Tibial artery (tissue), 4 donors: ENCODE measurements at regions of chr3 and their contacts with region 1.

Region 1: DNA sequence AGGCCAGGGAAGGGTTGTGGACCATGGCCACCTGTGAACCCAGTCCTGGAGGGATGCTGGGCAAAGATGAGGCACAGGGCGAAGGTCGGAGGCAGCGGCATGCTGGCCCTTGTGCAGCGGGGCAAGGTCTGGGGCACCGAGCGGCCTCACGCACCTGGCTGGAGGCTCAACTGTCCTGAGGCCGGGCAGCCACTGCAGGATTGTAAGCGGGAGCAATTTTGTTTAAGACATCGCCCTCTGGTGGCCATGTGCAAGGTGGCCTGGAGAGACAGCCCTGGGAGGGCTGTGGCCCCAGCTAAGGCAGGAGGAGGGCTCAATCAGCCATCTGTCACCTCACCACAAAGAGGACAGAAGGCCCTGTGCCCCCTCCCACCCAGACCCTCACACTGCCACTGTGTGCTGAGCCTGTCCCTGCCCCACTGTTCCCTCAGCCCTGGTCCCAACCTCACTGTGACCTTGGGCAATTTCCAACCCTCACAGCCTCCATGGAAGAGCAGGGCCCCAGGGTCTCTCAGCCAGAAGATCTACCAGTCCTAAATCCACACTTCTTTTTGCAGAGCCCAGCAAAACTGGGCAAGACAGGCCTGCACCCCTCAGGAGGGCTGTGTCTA is 46.2 kb downstream of the TPRA1 start:
- DNase-seq: peak; percentile 65 to 79
- H3K4me3 ChIP-seq: no peak overlapping the region
- H3K27ac ChIP-seq: no peak overlapping the region
- H3K4me1 ChIP-seq: peaks cover 0 to 26% (median 17%) of the 10 kb centered on the region in 4 donors
- H3K27me3 ChIP-seq: no peaks in the 10 kb centered on the region
- CTCF ChIP-seq: peak; percentile 66 to 72

Region 2: DNA sequence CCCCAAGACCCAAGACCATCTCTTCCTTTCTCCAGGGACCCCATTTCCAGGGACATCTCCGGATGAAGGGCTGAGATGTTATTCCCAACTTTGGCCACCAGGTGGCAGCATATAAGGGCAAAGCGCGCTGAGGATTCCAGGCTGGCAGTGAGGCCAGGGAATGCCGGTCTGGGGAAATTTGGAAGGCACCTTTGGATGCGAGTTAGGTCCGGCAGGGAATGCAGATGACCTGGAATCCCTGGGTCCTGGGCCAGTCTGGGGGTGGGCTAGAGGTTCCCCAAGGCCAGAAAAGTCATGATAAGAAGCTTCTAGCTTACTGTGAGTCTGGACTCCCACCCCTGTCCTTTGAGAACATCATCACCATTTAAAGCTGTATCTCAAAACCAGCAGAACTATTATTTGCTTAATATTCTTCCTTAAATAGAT is 1021.9 kb before region 1 on chr3:
- intact Hi-C with region 1: loop called (anchors 10 kb)
- DNase-seq: peak; percentile 50 to 70
- H3K4me3 ChIP-seq: no peak overlapping the region
- H3K27ac ChIP-seq: no peak overlapping the region
- H3K4me1 ChIP-seq: peaks cover 0 to 14% (median 12%) of the 10 kb centered on the region in 4 donors
- H3K27me3 ChIP-seq: peaks cover 0 to 48% of the 10 kb centered on the region in 2 donors
- CTCF ChIP-seq: peak; percentile 82 to 92

Region 3: DNA sequence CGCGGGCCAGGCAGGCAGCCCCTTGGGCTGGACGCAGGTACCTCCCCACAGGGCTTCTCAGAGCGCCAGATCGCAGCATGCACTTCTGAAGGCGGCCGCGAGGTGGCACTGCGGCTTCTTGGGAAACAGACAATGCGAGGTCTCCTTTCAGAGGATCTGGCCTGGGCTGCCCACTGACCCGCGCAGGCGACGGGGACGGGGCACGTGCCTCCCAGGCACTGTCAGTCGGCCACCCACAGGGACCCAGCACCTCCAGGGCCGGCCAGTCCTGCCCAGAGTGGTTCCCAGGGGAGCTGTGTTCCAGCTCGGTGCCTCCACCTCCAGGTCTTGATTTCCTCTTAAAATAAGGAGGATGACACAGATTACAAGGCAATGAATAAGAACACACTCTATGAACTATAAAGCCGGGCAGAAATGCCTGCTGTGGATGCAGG is 865.0 kb before region 1 on chr3:
- intact Hi-C with region 1: loop called (anchors 2 kb)
- DNase-seq: peak; percentile 82 to 86
- H3K4me3 ChIP-seq: no peak overlapping the region
- H3K27ac ChIP-seq: no peak overlapping the region
- H3K4me1 ChIP-seq: peaks cover 0 to 23% (median 17%) of the 10 kb centered on the region in 4 donors
- H3K27me3 ChIP-seq: peaks cover 0 to 11% of the 10 kb centered on the region in 2 donors
- CTCF ChIP-seq: peak; percentile 90 to 96

Region 4: GRCh38 chr3:126752303-126752842 is 791.9 kb before region 1 on chr3:
- intact Hi-C with region 1: loop called (anchors 10 kb)
- DNase-seq: peak; percentile 70 to 86
- H3K4me3 ChIP-seq: no peak overlapping the region
- H3K27ac ChIP-seq: no peak overlapping the region
- H3K4me1 ChIP-seq: peaks cover 0 to 3% (median 0%) of the 10 kb centered on the region in 4 donors
- H3K27me3 ChIP-seq: no peaks in the 10 kb centered on the region
- CTCF ChIP-seq: peak; percentile 80 to 82